Dendritic cell treated with granulocyte-macrophage colony-stimulating factor and Interleukin-4, amounts not matched to agents 40 ng/mL and 50 ng/mL, for 4 days (primary cell): ENCODE measurements at regions of chr3 and their contacts with region 1.

Region 1: GRCh38 chr3:192957441-192958021 is 39.9 kb upstream of the MB21D2 start:
- H3K4me3 Mint-ChIP-seq: peak overlapping the region; percentile 55
- H3K27ac Mint-ChIP-seq: peak overlapping the region; percentile 89
- H3K4me1 Mint-ChIP-seq: peaks cover 25% of the 10 kb centered on the region
- H3K27me3 Mint-ChIP-seq: peaks cover 2% of the 10 kb centered on the region

Region 2: DNA sequence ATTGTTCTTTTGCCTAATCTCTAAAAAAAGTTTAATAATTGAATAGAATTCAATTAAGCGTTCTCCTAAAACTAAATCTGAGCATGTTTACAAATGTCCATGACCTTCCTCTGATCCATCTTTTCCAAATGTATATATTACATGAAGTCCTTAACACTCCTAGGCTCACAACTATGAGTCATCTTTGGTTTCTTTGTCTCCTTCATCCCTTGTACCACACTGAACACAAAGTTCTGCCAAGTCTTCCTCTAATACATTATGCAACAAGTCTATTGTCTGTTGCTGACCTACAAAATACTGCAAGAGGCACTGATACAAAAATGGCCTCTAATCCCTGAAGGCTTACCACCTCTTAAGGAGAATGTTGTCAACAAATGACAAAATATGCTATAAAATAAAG is 946.4 kb before region 1 on chr3:
- intact Hi-C with region 1: no loop called
- H3K4me3 Mint-ChIP-seq: no peak overlapping the region
- H3K27ac Mint-ChIP-seq: no peak overlapping the region
- H3K4me1 Mint-ChIP-seq: no peaks in the 10 kb centered on the region
- H3K27me3 Mint-ChIP-seq: no peaks in the 10 kb centered on the region

Region 3: GRCh38 chr3:192899540-192899982 is 58.0 kb before region 1 on chr3:
- intact Hi-C with region 1: loop called (anchors 2 kb)
- H3K4me3 Mint-ChIP-seq: no peak overlapping the region
- H3K27ac Mint-ChIP-seq: peak overlapping the region; percentile 78
- H3K4me1 Mint-ChIP-seq: peaks cover 81% of the 10 kb centered on the region
- H3K27me3 Mint-ChIP-seq: no peaks in the 10 kb centered on the region